ENCODE measurements at regions of chr16 and their contacts with region 1.

Region 1: GRCh38 chr16:660459-661183 is 7.3 kb upstream of the RHOT2 start:
- DNase-seq: peak; percentile 91
- H3K4me3 ChIP-seq: peak overlapping the region in 2 of 4 donors; percentile 6 to 22
- H3K27ac ChIP-seq: peak overlapping the region; percentile 56 to 85 (median 76)
- H3K4me1 ChIP-seq: peaks cover 10 to 16% (median 14%) of the 10 kb centered on the region in 4 donors
- H3K27me3 ChIP-seq: no peaks in the 10 kb centered on the region
- CTCF ChIP-seq: peak; percentile 52 to 69 (median 65)
- EP300 ChIP-seq: no peak
- POLR2A ChIP-seq: peak; percentile 14

Region 2: DNA sequence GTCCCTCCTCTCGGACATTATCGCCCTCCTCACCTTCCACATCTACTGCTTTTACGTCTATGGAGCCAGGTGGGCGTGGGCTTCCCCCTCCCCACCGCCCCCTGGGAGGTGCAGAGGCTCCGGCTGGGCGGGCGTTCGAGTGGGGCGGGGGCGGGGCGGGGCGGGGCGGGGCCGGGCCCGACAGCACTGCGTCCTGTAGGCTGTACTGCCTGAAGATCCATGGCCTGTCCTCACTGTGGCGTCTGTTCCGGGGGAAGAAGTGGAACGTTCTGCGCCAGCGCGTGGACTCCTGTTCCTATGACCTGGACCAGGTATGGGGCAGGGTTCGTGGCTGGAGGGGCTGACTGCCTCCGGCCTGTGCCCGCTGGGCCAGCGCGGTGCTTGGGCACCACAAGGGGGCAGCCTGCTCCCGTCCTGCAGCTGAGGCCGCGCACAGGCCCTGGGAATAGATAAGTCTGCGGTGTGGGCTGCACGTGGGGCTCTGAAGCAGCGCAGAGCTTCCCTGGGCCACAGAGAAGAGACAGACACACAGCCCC is 81.7 kb before region 1 on chr16:
- in situ Hi-C with region 1: no loop called
- intact Hi-C with region 1: loop called (anchors 5 kb)
- DNase-seq: peak; percentile 79
- H3K4me3 ChIP-seq: peak overlapping the region in 1 of 4 donors; percentile 26
- H3K27ac ChIP-seq: no peak overlapping the region
- H3K4me1 ChIP-seq: peaks cover 0 to 6% (median 2%) of the 10 kb centered on the region in 4 donors
- H3K27me3 ChIP-seq: no peaks in the 10 kb centered on the region
- CTCF ChIP-seq: peak; percentile 70 to 95 (median 90)
- EP300 ChIP-seq: no peak
- POLR2A ChIP-seq: no peak

Region 3: DNA sequence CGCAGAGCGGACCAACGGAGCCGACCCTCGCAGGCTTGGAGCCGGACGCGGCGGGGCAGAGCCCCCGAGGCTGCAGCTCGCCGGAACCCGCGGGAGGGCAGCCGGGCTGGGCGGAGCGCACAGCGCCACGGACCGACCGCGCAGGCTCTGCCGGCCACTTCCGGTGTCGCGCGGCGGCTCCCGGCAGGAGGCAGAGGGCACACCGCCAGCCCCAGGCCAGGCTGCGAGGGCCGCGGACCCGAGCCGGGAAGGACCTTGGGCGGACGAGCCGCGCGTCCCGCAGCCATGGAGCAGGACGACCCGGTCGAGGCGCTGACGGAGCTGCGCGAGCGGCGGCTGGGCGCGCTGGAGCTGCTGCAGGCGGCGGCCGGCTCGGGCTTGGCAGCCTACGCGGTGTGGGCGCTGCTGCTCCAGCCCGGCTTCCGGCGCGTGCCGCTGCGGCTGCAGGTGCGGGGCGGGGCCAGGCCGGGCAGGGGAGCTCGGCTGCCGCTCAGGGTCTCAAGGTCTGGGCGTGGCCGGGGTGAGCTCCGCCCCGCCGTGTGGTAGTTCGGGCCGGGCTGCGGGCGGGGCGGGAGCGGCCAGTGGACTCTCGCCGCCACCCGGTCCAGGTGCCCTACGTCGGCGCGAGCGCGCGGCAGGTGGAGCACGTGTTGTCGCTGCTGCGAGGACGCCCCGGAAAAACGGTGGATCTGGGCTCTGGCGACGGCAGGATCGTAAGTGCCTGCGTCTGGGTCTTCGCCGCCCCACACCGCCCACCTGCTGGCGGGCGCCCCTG is 60.6 kb after region 1 on chr16 and contains the start of gene ANTKMT:
- in situ Hi-C with region 1: no loop called
- intact Hi-C with region 1: no loop called
- DNase-seq: peak; percentile 91
- H3K4me3 ChIP-seq: peak within 1 kb of the TSS; percentile 37 to 83 (median 68)
- H3K27ac ChIP-seq: peak within 1 kb of the TSS; percentile 90 to 94 (median 93)
- H3K4me1 ChIP-seq: peaks cover 26 to 47% (median 42%) of the 10 kb centered on the region in 4 donors
- H3K27me3 ChIP-seq: peaks cover 31% of the 10 kb centered on the region
- CTCF ChIP-seq: peak in 1 of 5 experiments; percentile 21
- EP300 ChIP-seq: no peak
- POLR2A ChIP-seq: no peak
- total RNA-seq, gene ANTKMT: 19.7 to 53.0 (median 38.2) TPM